Activated CD4-positive, alpha-beta T cell treated with anti-CD3 and anti-CD28 coated beads, Interleukin-2, amount 10 ng/mL, durations not matched to agents 7 days and 5 days (primary cell): ENCODE measurements at regions of chr14 and their contacts with region 1.

Region 1: GRCh38 chr14:24146978-24147760 is at the start of gene RNF31:
- DNase-seq: peak; percentile 100
- H3K4me3 Mint-ChIP-seq: peak within 1 kb of the TSS; percentile 100
- H3K27ac Mint-ChIP-seq: peak within 1 kb of the TSS; percentile 99
- H3K4me1 Mint-ChIP-seq: peaks cover 68% of the 10 kb centered on the region
- H3K27me3 Mint-ChIP-seq: no peaks in the 10 kb centered on the region
- total RNA-seq, gene RNF31: 147 to 160 TPM

Region 2: DNA sequence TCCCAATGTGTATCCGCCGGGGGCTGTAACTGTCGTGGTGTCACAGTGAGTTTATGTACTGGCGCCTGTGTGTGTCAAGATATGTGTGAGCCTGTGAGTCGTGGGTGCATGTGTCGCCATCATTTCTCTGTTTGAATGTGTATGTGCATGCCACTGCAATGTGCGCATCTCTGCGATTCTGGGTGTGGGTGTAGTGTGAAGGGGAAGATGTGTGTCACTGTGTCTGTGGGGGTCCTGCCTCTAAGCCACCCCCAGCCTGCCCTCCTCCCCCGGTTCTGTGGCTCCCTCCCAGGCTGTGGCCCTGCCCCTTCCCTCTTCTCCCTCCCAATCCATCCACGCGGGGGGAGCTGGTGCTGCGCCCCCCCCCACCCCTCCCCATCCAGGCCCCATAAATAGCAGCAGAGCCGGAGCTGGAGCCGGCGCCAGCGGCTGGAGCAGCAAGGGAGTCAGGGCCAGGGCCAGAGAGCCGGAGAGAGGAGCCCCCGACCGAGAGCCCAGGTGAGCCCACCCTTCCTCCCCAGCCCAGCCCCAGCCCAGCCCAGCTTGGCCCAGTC is 75.9 kb before region 1 on chr14 and contains the start of gene CPNE6:
- CTCF ChIA-PET with region 1: no interaction called
- POLR2A ChIA-PET with region 1: no interaction called
- DNase-seq: no peak
- H3K4me3 Mint-ChIP-seq: no peak within 1 kb of the TSS
- H3K27ac Mint-ChIP-seq: no peak within 1 kb of the TSS
- H3K4me1 Mint-ChIP-seq: peaks cover 11% of the 10 kb centered on the region
- H3K27me3 Mint-ChIP-seq: peaks cover 2% of the 10 kb centered on the region
- total RNA-seq, gene CPNE6: not detected

Region 3: GRCh38 chr14:24108336-24108874 is 38.8 kb before region 1 on chr14:
- CTCF ChIA-PET with region 1: interaction called, 12 read pairs
- POLR2A ChIA-PET with region 1: no interaction called
- DNase-seq: no peak
- H3K4me3 Mint-ChIP-seq: no peak overlapping the region
- H3K27ac Mint-ChIP-seq: peak overlapping the region; percentile 96
- H3K4me1 Mint-ChIP-seq: peaks cover 44% of the 10 kb centered on the region
- H3K27me3 Mint-ChIP-seq: no peaks in the 10 kb centered on the region

Region 4: DNA sequence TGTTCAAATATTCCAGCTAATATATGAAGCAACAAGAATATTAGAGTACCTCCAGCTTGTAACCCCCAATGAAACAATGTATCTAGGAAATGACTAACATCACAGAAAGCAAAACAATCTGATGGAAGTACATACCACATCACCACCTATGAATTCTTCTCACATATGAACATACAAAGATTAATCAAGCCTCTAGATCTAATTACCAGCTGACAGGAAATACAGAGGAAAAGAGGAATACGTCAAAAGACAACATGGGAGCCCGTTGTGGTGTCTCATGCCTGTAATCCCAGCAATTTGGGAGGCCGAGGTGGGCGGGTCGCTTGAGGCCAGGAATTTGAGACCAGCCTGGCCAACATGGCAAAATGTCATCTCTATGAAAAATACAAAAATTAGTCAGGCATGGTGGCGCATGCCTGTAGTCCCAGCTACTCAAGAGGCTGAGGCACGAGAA is 77.5 kb after region 1 on chr14:
- CTCF ChIA-PET with region 1: no interaction called
- POLR2A ChIA-PET with region 1: no interaction called
- DNase-seq: no peak
- H3K4me3 Mint-ChIP-seq: no peak overlapping the region
- H3K27ac Mint-ChIP-seq: no peak overlapping the region
- H3K4me1 Mint-ChIP-seq: peaks cover 21% of the 10 kb centered on the region
- H3K27me3 Mint-ChIP-seq: no peaks in the 10 kb centered on the region